ENCODE measurements at regions of chr3 and their contacts with region 1.

Region 1: DNA sequence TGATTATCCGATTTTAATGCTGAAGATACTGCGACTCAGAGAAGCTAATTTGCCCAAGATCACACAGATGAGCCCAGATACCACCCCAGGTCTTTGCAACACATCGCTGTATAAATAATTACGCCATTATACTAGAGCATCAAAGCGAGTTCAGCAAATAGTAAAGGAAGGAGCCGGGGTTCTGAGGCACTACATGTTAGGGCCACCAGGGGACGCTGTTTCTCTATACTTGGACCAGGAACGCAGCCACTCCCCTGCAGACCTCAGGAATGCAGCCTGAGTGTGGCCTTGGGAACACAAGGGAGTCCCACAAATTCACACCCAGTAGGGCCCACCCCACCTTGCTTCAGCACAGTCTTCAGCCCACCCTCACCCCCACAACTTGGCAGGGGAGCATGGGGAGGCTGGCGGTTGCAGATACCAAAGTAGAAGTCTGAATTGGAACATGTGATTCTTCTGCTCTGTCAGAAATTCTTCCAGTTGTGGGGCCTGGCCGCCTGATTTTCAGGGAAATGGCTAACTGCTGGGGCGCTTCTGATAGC is 57.8 kb upstream of the RYK start:
- DNase-seq: peak; percentile 85

Region 2: DNA sequence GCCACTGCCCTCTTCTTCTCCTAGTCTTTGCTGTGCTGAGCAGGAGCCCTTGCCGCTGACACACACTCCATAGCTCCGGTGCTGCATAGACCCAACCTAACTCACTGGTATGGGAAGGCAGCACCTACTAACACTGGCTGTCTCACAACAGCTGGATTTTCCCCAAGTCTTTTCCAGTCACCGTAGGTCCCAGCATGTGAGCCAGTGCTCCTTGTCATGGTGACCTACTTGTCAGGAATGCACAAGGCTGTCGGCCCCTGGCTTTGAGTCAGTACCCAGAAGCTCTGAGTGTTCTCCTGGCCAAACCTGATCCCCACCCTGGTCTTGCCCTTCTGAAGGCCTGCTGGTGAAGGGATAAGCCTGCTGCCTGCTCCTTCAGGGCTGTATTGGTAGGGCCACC is 40.1 kb after region 1 on chr3:
- intact Hi-C with region 1: no loop called
- DNase-seq: no peak

Region 3: GRCh38 chr3:134364061-134364935 is 55.9 kb after region 1 on chr3:
- intact Hi-C with region 1: loop called (anchors 2 kb)
- DNase-seq: peak; percentile 95

Region 4: GRCh38 chr3:134473868-134474546 is 165.6 kb after region 1 on chr3:
- intact Hi-C with region 1: loop called (anchors 2 kb)
- DNase-seq: no peak